BJ (cell line): ENCODE measurements at regions of chr10 and their contacts with region 1.

Region 1: DNA sequence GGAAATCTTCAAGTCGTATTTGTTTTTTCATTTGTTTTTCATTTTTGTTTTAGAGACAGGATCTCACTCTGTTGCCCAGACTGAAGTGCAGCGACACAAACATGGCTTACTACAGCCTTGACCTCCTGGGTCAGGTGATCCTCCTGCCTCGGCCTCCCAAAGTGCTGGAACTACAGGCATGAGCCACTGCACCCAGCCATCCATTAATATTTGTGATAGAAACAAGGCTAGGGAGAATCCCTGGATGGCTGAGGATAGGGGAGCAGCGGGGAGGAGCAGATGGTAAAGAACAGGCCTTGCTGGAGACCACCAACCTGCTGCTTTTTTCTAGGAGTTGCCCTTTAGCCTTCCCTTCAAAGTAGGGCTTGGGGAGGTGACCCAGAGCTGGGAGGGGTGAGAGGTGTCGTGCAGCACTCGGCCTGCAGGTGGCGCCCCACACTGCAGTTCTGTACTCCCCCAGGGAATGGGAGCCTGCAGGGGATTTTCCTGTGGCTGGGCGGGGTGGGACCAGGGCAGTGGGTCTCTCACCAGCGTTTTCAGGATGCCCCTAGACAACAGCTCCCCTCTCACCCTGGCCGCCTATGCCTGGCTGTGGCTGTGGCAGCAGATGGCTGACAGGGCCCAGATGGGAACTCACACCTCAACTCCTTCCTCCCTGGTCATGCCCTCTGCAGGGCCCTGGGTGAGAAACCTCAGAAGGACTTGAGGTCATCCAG is 12.6 kb upstream of the CDH23 start:
- DNase-seq: no peak
- H3K4me3 ChIP-seq: no peak overlapping the region
- H3K27me3 ChIP-seq: peaks cover 12% of the 10 kb centered on the region
- CTCF ChIP-seq: peak; percentile 97

Region 2: DNA sequence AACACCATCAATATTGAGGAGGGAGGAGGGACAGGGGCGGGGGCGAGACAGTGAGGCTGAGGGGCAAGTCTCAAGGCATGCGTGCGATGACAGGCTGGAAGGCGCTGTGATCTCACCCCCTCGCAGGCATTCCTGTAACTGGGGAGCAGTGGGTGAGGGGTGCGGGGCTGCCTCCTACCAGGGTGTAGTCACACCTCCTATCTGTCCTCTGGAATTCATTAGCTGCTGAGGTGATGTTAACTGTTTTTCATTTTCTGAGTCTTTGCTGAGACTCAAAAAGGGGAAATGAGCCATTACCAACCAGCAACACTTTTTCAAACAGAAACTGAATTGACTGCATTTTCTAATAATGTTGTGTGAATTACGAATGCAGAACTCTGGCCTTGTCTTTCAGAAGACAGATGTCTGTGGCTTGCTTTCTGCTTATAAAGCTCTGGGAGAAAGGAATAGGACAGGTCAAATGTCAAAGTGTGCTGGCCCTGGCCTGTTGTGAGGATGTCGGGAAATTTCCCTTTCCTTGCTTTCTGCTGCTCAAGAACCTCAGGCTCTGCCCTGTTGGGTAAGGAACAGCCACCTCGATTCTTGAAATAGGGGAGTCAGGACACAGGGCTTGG is 11.1 kb before region 1 on chr10:
- CTCF ChIA-PET with region 1: interaction called, 27 read pairs
- POLR2A ChIA-PET with region 1: no interaction called
- DNase-seq: no peak
- H3K4me3 ChIP-seq: no peak overlapping the region
- H3K27me3 ChIP-seq: peaks cover 10% of the 10 kb centered on the region
- CTCF ChIP-seq: no peak

Region 3: GRCh38 chr10:71396084-71396720 is 12.1 kb after region 1 on chr10:
- CTCF ChIA-PET with region 1: interaction called, 38 read pairs
- POLR2A ChIA-PET with region 1: no interaction called
- DNase-seq: no peak
- H3K4me3 ChIP-seq: no peak overlapping the region
- H3K27me3 ChIP-seq: peaks cover 50% of the 10 kb centered on the region
- CTCF ChIP-seq: no peak

Region 4: DNA sequence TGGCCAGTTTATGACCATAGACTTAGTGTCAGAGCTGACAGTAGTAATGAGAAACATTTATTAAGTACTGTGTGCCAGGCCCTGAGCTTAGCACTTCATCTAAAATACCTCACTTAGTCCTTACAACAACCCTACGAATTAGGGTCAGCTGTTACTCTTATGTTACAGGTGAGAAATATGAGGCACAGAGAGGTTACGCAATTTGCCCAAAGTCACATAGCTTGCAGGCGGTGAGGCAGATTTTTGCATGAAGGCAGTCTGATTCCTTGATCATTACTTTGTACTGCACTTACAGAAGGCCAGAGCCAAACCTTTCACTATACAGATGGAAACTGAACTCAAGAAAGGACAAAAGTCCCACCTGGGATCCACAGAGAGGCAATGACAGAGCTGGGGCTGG is 22.7 kb after region 1 on chr10:
- CTCF ChIA-PET with region 1: interaction called, 11 read pairs
- POLR2A ChIA-PET with region 1: no interaction called
- DNase-seq: no peak
- H3K4me3 ChIP-seq: no peak overlapping the region
- H3K27me3 ChIP-seq: peaks cover 4% of the 10 kb centered on the region
- CTCF ChIP-seq: no peak

Region 5: DNA sequence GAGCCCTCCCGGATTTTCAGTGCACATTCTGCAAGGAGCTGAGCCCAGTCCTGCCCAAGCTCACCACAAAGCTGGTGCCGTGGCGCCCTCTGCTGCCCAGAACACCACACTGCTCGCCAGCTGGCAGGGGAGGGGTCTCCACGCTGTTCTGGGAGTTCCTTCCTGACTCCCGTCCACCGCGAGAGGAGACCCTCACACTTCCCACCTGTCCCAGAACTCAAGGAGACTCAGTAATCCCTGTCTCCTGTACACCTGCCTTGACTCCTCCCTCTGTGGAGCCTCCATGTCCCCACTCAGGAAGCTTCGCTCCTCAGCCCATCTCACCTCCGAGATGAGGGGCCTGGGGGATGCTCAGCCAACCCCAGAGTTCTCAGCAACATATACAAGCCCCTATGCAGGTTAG is 324.2 kb after region 1 on chr10:
- CTCF ChIA-PET with region 1: interaction called, 13 read pairs
- POLR2A ChIA-PET with region 1: no interaction called
- DNase-seq: no peak
- H3K4me3 ChIP-seq: no peak overlapping the region
- H3K27me3 ChIP-seq: peaks cover 2% of the 10 kb centered on the region; the same call in 1 of the 2 replicates
- CTCF ChIP-seq: peak; percentile 82